Heart left ventricle (tissue), 16 donors: ENCODE measurements at regions of chr7 and their contacts with region 1.

Region 1: DNA sequence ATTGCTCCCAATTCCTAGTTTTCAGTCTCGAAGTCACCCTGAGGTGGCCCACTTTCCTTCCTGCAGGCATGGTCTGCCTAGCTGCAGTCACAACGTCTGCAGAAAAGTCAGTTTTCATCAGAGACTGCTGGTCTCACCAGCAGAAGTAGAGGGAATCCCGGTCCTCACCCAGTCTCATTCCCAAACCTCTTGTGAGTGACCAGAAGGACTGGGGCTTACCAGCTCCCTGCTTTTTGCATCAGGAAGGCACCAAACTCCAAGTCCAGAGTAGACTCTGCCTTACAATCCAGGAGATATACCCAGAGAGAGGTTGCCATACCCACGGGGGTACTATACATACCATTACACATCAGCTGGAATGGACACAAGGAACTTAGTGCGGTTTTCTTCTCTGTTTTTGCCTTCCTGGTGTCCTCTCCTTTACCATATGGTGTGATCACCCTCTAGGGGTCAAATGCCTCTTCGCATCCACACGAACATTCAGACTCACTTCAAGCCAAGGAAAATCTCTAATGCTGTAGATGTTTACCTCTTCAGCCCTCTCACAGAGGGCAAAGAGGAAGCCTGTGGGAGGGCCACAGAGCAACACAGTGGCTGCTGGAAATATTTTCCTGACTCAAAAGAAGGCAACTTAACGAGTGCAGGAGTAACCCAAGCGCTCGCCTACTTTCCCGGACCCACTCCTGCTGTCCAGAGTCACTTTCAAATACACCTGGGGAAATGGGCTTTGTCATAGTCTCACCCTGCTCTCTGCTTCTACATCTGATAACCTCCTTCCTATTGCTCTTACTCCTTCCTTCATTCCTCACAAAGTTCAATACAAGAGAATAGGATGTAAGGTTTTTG is 220.9 kb downstream of the C7orf25 start:
- DNase-seq: no peak
- ATAC-seq: peak; percentile 54 to 80 (median 64)
- H3K4me3 ChIP-seq: no peak overlapping the region
- H3K27ac ChIP-seq: peak overlapping the region in 1 of 12 donors; percentile 63
- H3K4me1 ChIP-seq: peaks cover 0 to 11% (median 3%) of the 10 kb centered on the region in 12 donors
- H3K27me3 ChIP-seq: no peaks in the 10 kb centered on the region
- CTCF ChIP-seq: peak; percentile 16 to 52 (median 34)
- POLR2A ChIP-seq: no peak

Region 2: GRCh38 chr7:42237162-42237821 is 453.7 kb before region 1 on chr7 and contains the start of gene GLI3:
- intact Hi-C with region 1: loop called in 1 of 10 experiments (anchors 10 kb)
- DNase-seq: peak; percentile 88 to 89 (median 89)
- ATAC-seq: peak; percentile 85 to 90 (median 90)
- H3K4me3 ChIP-seq: peak within 1 kb of the TSS; percentile 42 to 95 (median 79)
- H3K27ac ChIP-seq: peak within 1 kb of the TSS; percentile 64 to 95 (median 86)
- H3K4me1 ChIP-seq: peaks cover 0 to 16% (median 8%) of the 10 kb centered on the region in 12 donors
- H3K27me3 ChIP-seq: peaks cover 0 to 40% (median 0%) of the 10 kb centered on the region in 9 donors
- CTCF ChIP-seq: peak in 7 of 12 donors; percentile 6 to 56 (median 27)
- POLR2A ChIP-seq: peak in 1 of 2 donors; percentile 41
- total RNA-seq, gene GLI3: 2.0 to 14.4 (median 6.4) TPM

Region 3: GRCh38 chr7:42502022-42502421 is 189.0 kb before region 1 on chr7:
- intact Hi-C with region 1: loop called in 1 of 10 experiments (anchors 5 kb)
- DNase-seq: no peak
- ATAC-seq: peak in 1 of 4 donors; percentile 62
- H3K4me3 ChIP-seq: no peak overlapping the region
- H3K27ac ChIP-seq: no peak overlapping the region
- H3K4me1 ChIP-seq: no peaks in the 10 kb centered on the region
- H3K27me3 ChIP-seq: no peaks in the 10 kb centered on the region
- CTCF ChIP-seq: no peak
- POLR2A ChIP-seq: no peak

Region 4: GRCh38 chr7:42639929-42640328 is 51.1 kb before region 1 on chr7:
- intact Hi-C with region 1: no loop called
- DNase-seq: no peak
- ATAC-seq: no peak
- H3K4me3 ChIP-seq: no peak overlapping the region
- H3K27ac ChIP-seq: no peak overlapping the region
- H3K4me1 ChIP-seq: no peaks in the 10 kb centered on the region
- H3K27me3 ChIP-seq: no peaks in the 10 kb centered on the region
- CTCF ChIP-seq: no peak
- POLR2A ChIP-seq: no peak

Region 5: GRCh38 chr7:42720876-42721796 is 30.1 kb after region 1 on chr7:
- intact Hi-C with region 1: no loop called
- DNase-seq: no peak
- ATAC-seq: no peak
- H3K4me3 ChIP-seq: no peak overlapping the region
- H3K27ac ChIP-seq: no peak overlapping the region
- H3K4me1 ChIP-seq: no peaks in the 10 kb centered on the region
- H3K27me3 ChIP-seq: no peaks in the 10 kb centered on the region
- CTCF ChIP-seq: no peak
- POLR2A ChIP-seq: no peak

Region 6: DNA sequence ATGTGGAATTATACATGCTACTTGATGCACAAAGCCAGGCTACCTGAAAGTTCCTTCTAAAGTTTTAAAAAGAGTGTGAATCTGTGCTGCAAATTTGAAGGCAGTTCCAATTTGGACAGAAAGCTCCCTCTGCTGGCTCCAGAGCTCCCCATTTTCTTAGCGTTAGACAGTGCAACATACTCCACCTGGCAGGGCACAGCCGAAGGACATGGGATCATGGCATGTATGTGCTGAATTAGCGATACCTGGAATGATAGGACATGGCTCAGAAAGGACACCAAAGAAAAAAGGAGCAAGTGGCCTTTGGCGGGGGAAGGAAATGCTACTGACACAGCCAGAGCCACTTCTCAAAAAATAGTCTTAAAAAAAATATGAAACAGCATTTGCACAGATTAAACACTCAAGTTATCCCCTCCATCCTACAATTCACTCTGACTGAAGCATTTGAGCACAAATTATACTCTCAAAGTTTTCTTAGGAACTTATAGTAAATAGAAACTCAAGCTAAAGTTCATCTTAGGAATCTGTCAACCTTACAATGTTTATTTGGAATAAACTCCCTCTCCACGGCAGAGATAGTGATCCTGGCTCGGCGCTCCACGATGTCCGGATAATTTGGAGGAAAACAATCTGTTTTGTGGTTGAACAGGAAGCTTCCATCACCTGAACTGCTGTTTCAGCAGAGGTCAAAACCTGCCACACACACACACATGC is 140.9 kb after region 1 on chr7:
- intact Hi-C with region 1: loop called in 2 of 10 experiments (anchors 10 kb)
- DNase-seq: peak in 4 of 5 donors; percentile 21 to 42 (median 34)
- ATAC-seq: peak; percentile 42 to 75 (median 72)
- H3K4me3 ChIP-seq: no peak overlapping the region
- H3K27ac ChIP-seq: peak overlapping the region in 1 of 12 donors; percentile 18
- H3K4me1 ChIP-seq: peaks cover 0 to 9% (median 1%) of the 10 kb centered on the region in 12 donors
- H3K27me3 ChIP-seq: peaks cover 0 to 7% (median 0%) of the 10 kb centered on the region in 9 donors
- CTCF ChIP-seq: peak; percentile 29 to 81 (median 64)
- POLR2A ChIP-seq: no peak

Region 7: GRCh38 chr7:43108255-43109011 is 417.4 kb after region 1 on chr7:
- intact Hi-C with region 1: no loop called
- DNase-seq: peak in 3 of 5 donors; percentile 23 to 63 (median 56)
- ATAC-seq: peak in 3 of 4 donors; percentile 18 to 87 (median 86)
- H3K4me3 ChIP-seq: no peak overlapping the region
- H3K27ac ChIP-seq: no peak overlapping the region
- H3K4me1 ChIP-seq: peaks cover 0 to 13% (median 9%) of the 10 kb centered on the region in 12 donors
- H3K27me3 ChIP-seq: peaks cover 0 to 55% (median 30%) of the 10 kb centered on the region in 9 donors
- CTCF ChIP-seq: peak; percentile 57 to 79 (median 68)
- POLR2A ChIP-seq: no peak